ENCODE measurements at regions of chr15 and their contacts with region 1.

Region 1: GRCh38 chr15:35912196-35912595 is 366.2 kb upstream of the DPH6 start:
- DNase-seq: no peak
- H3K4me3 ChIP-seq: no peak overlapping the region
- H3K27ac ChIP-seq: no peak overlapping the region
- H3K4me1 ChIP-seq: no peaks in the 10 kb centered on the region
- H3K27me3 ChIP-seq: no peaks in the 10 kb centered on the region
- CTCF ChIP-seq: no peak
- POLR2A ChIP-seq: no peak

Region 2: DNA sequence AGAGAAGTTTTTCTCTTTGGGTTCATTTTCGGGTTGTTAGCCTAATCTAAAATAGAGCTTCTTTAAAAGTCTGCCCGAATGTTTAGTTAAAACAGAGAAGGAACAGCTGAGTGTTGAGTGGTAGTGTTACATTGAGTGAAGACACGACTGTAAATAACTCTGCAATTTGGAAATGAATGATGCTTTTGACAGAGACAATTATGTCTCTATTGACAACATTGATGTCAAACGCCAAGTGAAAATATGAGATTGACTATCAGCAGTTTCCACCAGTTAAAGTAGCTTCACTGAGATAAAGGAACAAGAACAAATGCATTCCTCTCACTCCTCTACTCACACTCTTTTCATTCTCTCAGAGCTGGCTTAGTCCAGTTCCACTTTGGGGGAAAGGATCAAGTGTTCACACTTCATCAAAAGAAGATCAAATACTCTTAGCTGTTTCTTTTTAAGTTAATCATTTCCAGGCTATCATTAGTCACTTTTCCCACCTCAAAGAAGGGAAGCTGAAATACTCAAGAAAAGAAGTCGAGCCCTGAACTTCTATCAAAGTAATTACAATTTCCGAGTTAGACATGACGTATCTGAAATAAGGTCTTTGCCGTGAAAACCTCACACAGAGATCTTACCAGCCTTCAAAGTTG is 32.9 kb after region 1 on chr15:
- intact Hi-C with region 1: loop called (anchors 1 kb)
- DNase-seq: no peak
- H3K4me3 ChIP-seq: no peak overlapping the region
- H3K27ac ChIP-seq: no peak overlapping the region
- H3K4me1 ChIP-seq: no peaks in the 10 kb centered on the region
- H3K27me3 ChIP-seq: no peaks in the 10 kb centered on the region
- CTCF ChIP-seq: no peak
- POLR2A ChIP-seq: no peak

Region 3: GRCh38 chr15:36284911-36285310 is 372.7 kb after region 1 on chr15:
- intact Hi-C with region 1: no loop called
- DNase-seq: no peak
- H3K4me3 ChIP-seq: no peak overlapping the region
- H3K27ac ChIP-seq: no peak overlapping the region
- H3K4me1 ChIP-seq: no peaks in the 10 kb centered on the region
- H3K27me3 ChIP-seq: no peaks in the 10 kb centered on the region
- CTCF ChIP-seq: no peak
- POLR2A ChIP-seq: no peak